Left ventricle myocardium superior (tissue), 1 donor: ENCODE measurements at regions of chr12 and their contacts with region 1.

Region 1: DNA sequence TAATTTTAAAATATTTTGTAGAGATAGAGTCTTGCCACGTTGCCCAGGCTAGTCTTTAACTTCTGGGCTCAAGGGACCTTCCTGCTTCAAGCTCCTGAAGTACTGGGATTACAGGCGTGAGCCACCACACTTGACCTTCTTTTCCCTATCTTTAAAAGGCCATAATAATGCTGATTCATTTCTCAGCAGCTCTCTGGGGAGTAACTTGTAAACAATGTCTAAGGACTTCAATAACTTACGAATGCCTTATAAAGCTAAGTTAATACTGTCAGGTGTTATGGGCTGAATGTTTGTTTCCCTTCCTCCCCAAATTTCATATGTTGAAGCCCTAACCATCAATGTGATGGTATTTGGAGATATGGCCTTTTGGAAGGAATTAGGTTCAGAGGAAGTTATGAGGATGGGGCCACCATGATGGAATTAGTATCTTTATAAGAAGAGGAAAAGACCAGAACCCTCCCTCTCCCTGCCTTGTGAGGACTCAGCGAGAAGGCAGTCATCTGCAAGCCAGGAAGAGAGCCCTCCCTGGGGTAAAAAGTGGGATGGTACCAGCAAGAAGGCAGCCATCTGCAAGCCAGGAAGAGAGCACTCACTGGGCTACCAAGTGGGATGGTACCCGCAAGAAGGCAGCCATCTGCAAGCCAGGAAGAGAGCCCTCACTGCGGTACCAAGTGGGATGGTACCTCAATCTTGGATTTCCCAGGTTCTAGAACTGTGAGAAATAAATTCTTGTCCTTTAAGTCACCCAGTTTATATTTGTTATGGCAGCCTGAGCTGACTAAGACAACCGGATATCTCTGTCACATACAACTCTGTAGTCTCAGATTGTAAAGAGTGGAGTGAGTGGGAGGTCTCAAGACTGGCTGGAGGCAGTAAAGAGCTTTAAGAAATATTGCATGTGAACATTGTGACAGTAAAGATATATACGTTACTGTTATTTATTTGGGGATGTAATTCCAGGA is 16.3 kb upstream of the YBX3 start:
- DNase-seq: no peak
- ATAC-seq: no peak

Region 2: GRCh38 chr12:10469701-10470100 is 269.7 kb before region 1 on chr12:
- intact Hi-C with region 1: no loop called
- DNase-seq: no peak
- ATAC-seq: no peak

Region 3: GRCh38 chr12:10607885-10608458 is 131.5 kb before region 1 on chr12:
- intact Hi-C with region 1: loop called (anchors 10 kb)
- DNase-seq: no peak
- ATAC-seq: no peak

Region 4: GRCh38 chr12:10901427-10901826 is 162.0 kb after region 1 on chr12:
- intact Hi-C with region 1: no loop called
- DNase-seq: no peak
- ATAC-seq: no peak